Ascending aorta (tissue), 2 donors: ENCODE measurements at regions of chr18 and their contacts with region 1.

Region 1: GRCh38 chr18:46281185-46282176 is 177.3 kb downstream of the HAUS1 start:
- DNase-seq: no peak
- H3K4me3 ChIP-seq: no peak overlapping the region
- H3K27ac ChIP-seq: no peak overlapping the region
- H3K4me1 ChIP-seq: no peaks in the 10 kb centered on the region
- H3K27me3 ChIP-seq: no peaks in the 10 kb centered on the region
- CTCF ChIP-seq: peak; percentile 65 to 90 (median 77)

Region 2: GRCh38 chr18:46481048-46481846 is 199.8 kb after region 1 on chr18:
- intact Hi-C with region 1: loop called (anchors 2 kb)
- DNase-seq: no peak
- H3K4me3 ChIP-seq: no peak overlapping the region
- H3K27ac ChIP-seq: no peak overlapping the region
- H3K4me1 ChIP-seq: no peaks in the 10 kb centered on the region
- H3K27me3 ChIP-seq: no peaks in the 10 kb centered on the region
- CTCF ChIP-seq: peak; percentile 16 to 67 (median 59)

Region 3: GRCh38 chr18:46756559-46757201 is 475.2 kb after region 1 on chr18 and contains the start of gene ST8SIA5:
- intact Hi-C with region 1: no loop called
- DNase-seq: no peak
- H3K4me3 ChIP-seq: peak within 1 kb of the TSS; percentile 50 to 51
- H3K27ac ChIP-seq: no peak within 1 kb of the TSS
- H3K4me1 ChIP-seq: peaks cover 0 to 3% of the 10 kb centered on the region in 2 donors
- H3K27me3 ChIP-seq: peaks cover 6% of the 10 kb centered on the region
- CTCF ChIP-seq: no peak
- total RNA-seq, gene ST8SIA5: 0.11 TPM

Region 4: DNA sequence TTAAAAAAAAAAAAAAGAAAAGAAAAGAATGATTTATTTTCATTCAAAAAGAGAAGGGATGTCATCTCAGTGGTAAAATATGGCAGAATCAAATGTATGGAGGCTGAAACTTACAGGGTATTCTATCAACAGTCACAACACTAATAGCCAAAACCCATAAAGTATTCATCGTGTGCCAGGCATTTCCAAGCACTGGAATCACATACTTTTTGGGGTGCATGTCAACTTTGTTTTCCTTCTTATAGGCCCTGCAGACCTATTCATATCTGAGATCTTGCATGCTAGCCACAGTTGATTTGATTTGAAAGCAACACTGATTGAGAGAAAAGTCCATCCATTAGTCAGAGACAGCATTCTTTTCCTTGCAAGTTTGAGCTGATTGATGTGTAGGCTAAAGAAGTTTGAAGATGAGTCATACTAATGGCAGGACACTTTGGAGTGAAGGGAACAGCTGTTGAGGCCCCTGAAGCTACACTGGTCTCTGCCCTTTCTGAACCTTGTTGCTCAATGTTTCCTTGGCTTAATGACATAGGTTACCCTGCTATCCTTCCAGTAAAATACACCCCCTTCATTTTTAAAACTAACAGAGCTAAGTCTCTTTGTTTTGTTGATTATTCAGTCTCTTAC is 658.0 kb after region 1 on chr18:
- intact Hi-C with region 1: no loop called
- DNase-seq: no peak
- H3K4me3 ChIP-seq: no peak overlapping the region
- H3K27ac ChIP-seq: no peak overlapping the region
- H3K4me1 ChIP-seq: no peaks in the 10 kb centered on the region
- H3K27me3 ChIP-seq: no peaks in the 10 kb centered on the region
- CTCF ChIP-seq: no peak